Psoas muscle (tissue), 8 donors: ENCODE measurements at regions of chr19 and their contacts with region 1.

Region 1: GRCh38 chr19:43983912-43984686 is at the start of gene ZNF155:
- DNase-seq: peak; percentile 89 to 93
- ATAC-seq: peak; percentile 100
- H3K4me3 ChIP-seq: peak within 1 kb of the TSS; percentile 81
- H3K27ac ChIP-seq: peak within 1 kb of the TSS; percentile 62
- H3K4me1 ChIP-seq: peaks cover 4% of the 10 kb centered on the region
- H3K27me3 ChIP-seq: no peaks in the 10 kb centered on the region
- CTCF ChIP-seq: no peak
- total RNA-seq, gene ZNF155: 1.5 to 4.0 (median 2.5) TPM

Region 2: DNA sequence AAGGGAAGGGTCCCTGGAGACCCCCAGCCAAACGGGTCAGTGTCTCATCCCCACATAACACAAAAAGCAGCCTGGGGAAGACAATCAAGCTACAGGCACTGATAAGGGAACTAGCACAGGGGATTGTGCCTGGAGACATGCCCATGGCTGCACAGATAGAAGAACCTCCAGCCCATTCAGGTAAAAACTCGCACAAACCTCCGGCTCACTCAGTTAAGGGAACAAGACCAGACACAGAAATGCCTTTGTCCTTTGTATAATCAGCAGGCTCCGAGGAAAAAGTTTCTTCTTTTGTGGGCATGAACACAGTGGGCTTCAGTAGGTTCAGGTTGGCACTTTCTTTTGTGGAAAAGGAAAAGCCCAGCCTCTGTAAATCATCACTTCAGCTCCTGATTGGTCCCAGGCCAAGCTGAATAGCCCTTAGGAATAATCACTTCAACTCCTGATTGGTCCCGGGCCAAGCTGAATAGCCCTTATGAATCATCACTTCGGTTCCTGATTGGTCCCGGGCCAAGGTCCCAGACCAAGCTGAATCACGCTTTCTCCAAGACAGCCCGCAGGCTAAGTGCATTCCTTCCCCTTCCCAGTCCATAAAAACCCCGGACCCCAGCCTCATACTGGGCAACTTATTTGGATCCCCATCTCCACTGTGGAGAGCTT is 13.7 kb after region 1 on chr19:
- intact Hi-C with region 1: loop called (anchors 2 kb)
- DNase-seq: no peak
- ATAC-seq: no peak
- H3K4me3 ChIP-seq: no peak overlapping the region
- H3K27ac ChIP-seq: no peak overlapping the region
- H3K4me1 ChIP-seq: peaks cover 4% of the 10 kb centered on the region
- H3K27me3 ChIP-seq: no peaks in the 10 kb centered on the region
- CTCF ChIP-seq: no peak

Region 3: GRCh38 chr19:44002566-44003460 is 18.7 kb after region 1 on chr19 and contains the start of gene ZNF230:
- intact Hi-C with region 1: loop called (anchors 2 kb)
- DNase-seq: peak; percentile 88 to 93
- ATAC-seq: peak; percentile 100
- H3K4me3 ChIP-seq: peak within 1 kb of the TSS; percentile 79
- H3K27ac ChIP-seq: peak within 1 kb of the TSS; percentile 79
- H3K4me1 ChIP-seq: peaks cover 12% of the 10 kb centered on the region
- H3K27me3 ChIP-seq: no peaks in the 10 kb centered on the region
- CTCF ChIP-seq: no peak
- total RNA-seq, gene ZNF230: 0.25 to 1.8 (median 1.2) TPM